PC-3 (cell line): ENCODE measurements at regions of chr6 and their contacts with region 1.

Region 1: GRCh38 chr6:93419304-93420162 is at the start of gene EPHA7:
- DNase-seq: peak; percentile 93
- ATAC-seq: peak; percentile 75
- H3K4me3 ChIP-seq: peak within 1 kb of the TSS; percentile 81
- H3K27ac ChIP-seq: peak within 1 kb of the TSS; percentile 14; the same call in 1 of the 2 replicates
- H3K4me1 ChIP-seq: 0 out of 2 replicates have a peak, but pooled peaks cover 2% of the 10 kb centered on the region
- H3K27me3 ChIP-seq: peaks cover 49% of the 10 kb centered on the region
- CTCF ChIP-seq: no peak
- total RNA-seq, gene EPHA7: 0.52 and 1.4 TPM in 2 replicates

Region 2: GRCh38 chr6:92810913-92811312 is 608.6 kb before region 1 on chr6:
- CTCF ChIA-PET with region 1: interaction called, 4 read pairs
- POLR2A ChIA-PET with region 1: no interaction called
- intact Hi-C with region 1: loop called (anchors 2 kb)
- DNase-seq: peak; percentile 41
- ATAC-seq: peak; percentile 54
- H3K4me3 ChIP-seq: no peak overlapping the region
- H3K27ac ChIP-seq: no peak overlapping the region
- H3K4me1 ChIP-seq: no peaks in the 10 kb centered on the region
- H3K27me3 ChIP-seq: no peaks in the 10 kb centered on the region
- CTCF ChIP-seq: peak; percentile 65

Region 3: DNA sequence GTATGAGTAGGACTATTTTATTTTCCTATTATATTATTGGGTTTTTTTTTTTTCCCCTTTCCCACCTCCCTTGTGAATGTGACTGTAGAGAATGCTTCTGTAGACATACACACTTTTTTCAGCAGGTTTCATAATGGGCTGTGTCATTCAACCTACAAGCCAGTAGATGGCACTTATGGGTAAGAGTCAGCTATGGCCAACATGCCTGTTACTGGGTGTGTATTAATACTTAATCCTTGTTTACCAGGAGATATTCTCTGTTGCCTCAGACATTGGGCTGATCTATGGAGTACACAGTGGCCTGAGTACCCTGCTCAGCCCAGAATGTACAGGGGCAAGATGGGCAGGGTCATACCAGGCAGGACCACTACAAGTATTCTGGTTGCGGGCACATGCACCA is 382.7 kb before region 1 on chr6:
- CTCF ChIA-PET with region 1: no interaction called
- POLR2A ChIA-PET with region 1: no interaction called
- intact Hi-C with region 1: loop called (anchors 1 kb)
- DNase-seq: peak; percentile 18
- ATAC-seq: peak; percentile 55; the same call in 1 of the 2 replicates
- H3K4me3 ChIP-seq: no peak overlapping the region
- H3K27ac ChIP-seq: no peak overlapping the region
- H3K4me1 ChIP-seq: no peaks in the 10 kb centered on the region
- H3K27me3 ChIP-seq: no peaks in the 10 kb centered on the region
- CTCF ChIP-seq: peak; percentile 48

Region 4: GRCh38 chr6:93183531-93183972 is 236.0 kb before region 1 on chr6:
- CTCF ChIA-PET with region 1: no interaction called
- POLR2A ChIA-PET with region 1: no interaction called
- intact Hi-C with region 1: loop called (anchors 2 kb)
- DNase-seq: no peak
- ATAC-seq: no peak
- H3K4me3 ChIP-seq: no peak overlapping the region
- H3K27ac ChIP-seq: peak overlapping the region; percentile 20; the same call in 1 of the 2 replicates
- H3K4me1 ChIP-seq: no peaks in the 10 kb centered on the region
- H3K27me3 ChIP-seq: no peaks in the 10 kb centered on the region
- CTCF ChIP-seq: no peak

Region 5: DNA sequence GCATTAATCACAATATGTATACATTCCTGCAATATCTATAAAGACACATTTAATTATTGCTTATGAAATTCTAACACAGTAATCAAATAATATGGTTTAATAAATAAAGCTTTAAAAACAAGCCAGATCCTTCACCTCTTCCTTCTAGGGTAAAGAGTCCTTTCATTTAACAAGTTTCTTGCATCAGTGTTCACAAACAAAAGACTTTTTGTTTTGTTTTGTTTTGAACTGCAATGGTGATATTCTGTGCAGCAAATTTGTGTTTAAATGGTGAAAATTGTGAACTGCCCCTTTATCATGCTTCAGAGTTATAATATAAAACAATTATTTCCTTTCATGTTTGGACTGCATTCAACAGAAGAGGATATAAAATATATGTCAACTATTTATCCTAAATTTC is 177.5 kb before region 1 on chr6:
- CTCF ChIA-PET with region 1: no interaction called
- POLR2A ChIA-PET with region 1: interaction called, 4 read pairs
- intact Hi-C with region 1: loop called (anchors 5 kb)
- DNase-seq: no peak
- ATAC-seq: peak; percentile 24; the same call in 1 of the 2 replicates
- H3K4me3 ChIP-seq: no peak overlapping the region
- H3K27ac ChIP-seq: no peak overlapping the region
- H3K4me1 ChIP-seq: no peaks in the 10 kb centered on the region
- H3K27me3 ChIP-seq: no peaks in the 10 kb centered on the region
- CTCF ChIP-seq: no peak

Region 6: GRCh38 chr6:93266116-93266817 is 153.3 kb before region 1 on chr6:
- CTCF ChIA-PET with region 1: no interaction called
- POLR2A ChIA-PET with region 1: no interaction called
- intact Hi-C with region 1: loop called (anchors 2 kb)
- DNase-seq: no peak
- ATAC-seq: no peak
- H3K4me3 ChIP-seq: no peak overlapping the region
- H3K27ac ChIP-seq: no peak overlapping the region
- H3K4me1 ChIP-seq: peaks cover 5% of the 10 kb centered on the region; the same call in 1 of the 2 replicates
- H3K27me3 ChIP-seq: no peaks in the 10 kb centered on the region
- CTCF ChIP-seq: no peak

Region 7: GRCh38 chr6:93341900-93342613 is 77.5 kb before region 1 on chr6:
- CTCF ChIA-PET with region 1: no interaction called
- POLR2A ChIA-PET with region 1: no interaction called
- intact Hi-C with region 1: loop called (anchors 5 kb)
- DNase-seq: no peak
- ATAC-seq: no peak
- H3K4me3 ChIP-seq: no peak overlapping the region
- H3K27ac ChIP-seq: no peak overlapping the region
- H3K4me1 ChIP-seq: no peaks in the 10 kb centered on the region
- H3K27me3 ChIP-seq: no peaks in the 10 kb centered on the region
- CTCF ChIP-seq: no peak